A673 (cell line): ENCODE measurements at regions of chr10 and their contacts with region 1.

Region 1: GRCh38 chr10:59985639-59986038 is 79.3 kb upstream of the CCDC6 start:
- DNase-seq: no peak
- H3K4me3 ChIP-seq: no peak overlapping the region
- H3K27ac ChIP-seq: no peak overlapping the region
- H3K4me1 ChIP-seq: no peaks in the 10 kb centered on the region
- H3K27me3 ChIP-seq: no peaks in the 10 kb centered on the region
- CTCF ChIP-seq: no peak

Region 2: GRCh38 chr10:59917922-59918321 is 67.7 kb before region 1 on chr10:
- CTCF ChIA-PET with region 1: no interaction called
- POLR2A ChIA-PET with region 1: no interaction called
- intact Hi-C with region 1: loop called (anchors 5 kb)
- DNase-seq: no peak
- H3K4me3 ChIP-seq: no peak overlapping the region
- H3K27ac ChIP-seq: no peak overlapping the region
- H3K4me1 ChIP-seq: no peaks in the 10 kb centered on the region
- H3K27me3 ChIP-seq: no peaks in the 10 kb centered on the region
- CTCF ChIP-seq: no peak